Activated T-helper 2 cell treated with anti-CD3 and anti-CD28 coated beads, Interferon-gamma antibody, Interleukin-2, Interleukin-4, amounts not matched to agents 10 μg/mL and 5 μg/mL and 100 μg/mL, durations not matched to agents 14 hours and 24 hours and 36 hours (primary cell): ENCODE measurements at regions of chr19 and their contacts with region 1.

Region 1: GRCh38 chr19:55674841-55675660 is at the start of gene EPN1:
- DNase-seq: peak; percentile 95
- H3K4me3 Mint-ChIP-seq: peak within 1 kb of the TSS; percentile 100
- H3K27ac Mint-ChIP-seq: peak within 1 kb of the TSS; percentile 97
- H3K4me1 Mint-ChIP-seq: peaks cover 37% of the 10 kb centered on the region
- H3K27me3 Mint-ChIP-seq: no peaks in the 10 kb centered on the region
- total RNA-seq, gene EPN1: 40.3 and 41.8 TPM in 2 replicates

Region 2: DNA sequence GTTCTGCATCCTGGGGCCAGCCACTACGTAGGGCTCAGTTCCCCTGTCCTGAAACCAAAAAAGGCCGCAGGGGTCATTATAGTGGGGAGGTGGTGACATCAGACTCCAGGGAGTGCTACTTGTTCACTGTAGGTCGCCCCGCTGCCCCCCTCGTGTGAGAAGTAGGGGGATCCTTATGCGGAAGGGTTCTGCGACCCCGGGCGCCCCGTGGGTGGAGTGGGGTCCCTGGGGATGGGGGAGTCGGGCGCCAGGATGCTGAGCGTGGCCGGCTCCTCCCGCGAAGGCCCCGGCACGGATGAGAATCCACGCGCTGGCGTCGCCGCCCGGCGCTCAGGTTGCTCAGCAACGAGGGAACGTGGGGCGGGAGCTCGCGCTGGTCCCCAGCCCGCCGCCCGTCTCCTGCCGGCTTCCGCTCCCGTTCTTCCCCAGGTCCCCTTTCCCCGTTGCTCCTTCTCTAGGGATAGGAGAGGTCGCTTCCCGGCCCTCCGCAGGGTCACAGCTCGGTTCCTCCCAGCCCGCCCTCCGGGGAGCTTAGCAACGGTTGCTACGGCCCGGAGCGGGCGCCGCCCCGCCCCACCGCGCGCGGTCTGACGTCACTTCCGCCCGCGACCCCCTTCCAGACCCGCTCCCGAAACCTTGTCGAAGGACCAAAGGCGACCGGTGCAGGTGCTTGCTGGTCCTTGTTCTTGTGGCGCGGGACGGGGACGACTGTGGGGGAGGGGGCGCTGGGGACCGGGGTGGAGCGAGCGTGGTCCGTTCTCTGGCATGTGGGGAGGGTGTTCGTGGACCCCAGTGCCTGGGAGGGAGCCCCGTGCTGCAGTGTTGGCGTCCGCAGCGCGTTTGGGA is 190.2 kb before region 1 on chr19 and contains the start of gene NAT14:
- intact Hi-C with region 1: no loop called
- DNase-seq: peak; percentile 62
- H3K4me3 Mint-ChIP-seq: peak within 1 kb of the TSS; percentile 80
- H3K27ac Mint-ChIP-seq: peak within 1 kb of the TSS; percentile 68
- H3K4me1 Mint-ChIP-seq: peaks cover 14% of the 10 kb centered on the region
- H3K27me3 Mint-ChIP-seq: no peaks in the 10 kb centered on the region
- total RNA-seq, gene NAT14: 20.0 and 20.2 TPM in 2 replicates

Region 3: DNA sequence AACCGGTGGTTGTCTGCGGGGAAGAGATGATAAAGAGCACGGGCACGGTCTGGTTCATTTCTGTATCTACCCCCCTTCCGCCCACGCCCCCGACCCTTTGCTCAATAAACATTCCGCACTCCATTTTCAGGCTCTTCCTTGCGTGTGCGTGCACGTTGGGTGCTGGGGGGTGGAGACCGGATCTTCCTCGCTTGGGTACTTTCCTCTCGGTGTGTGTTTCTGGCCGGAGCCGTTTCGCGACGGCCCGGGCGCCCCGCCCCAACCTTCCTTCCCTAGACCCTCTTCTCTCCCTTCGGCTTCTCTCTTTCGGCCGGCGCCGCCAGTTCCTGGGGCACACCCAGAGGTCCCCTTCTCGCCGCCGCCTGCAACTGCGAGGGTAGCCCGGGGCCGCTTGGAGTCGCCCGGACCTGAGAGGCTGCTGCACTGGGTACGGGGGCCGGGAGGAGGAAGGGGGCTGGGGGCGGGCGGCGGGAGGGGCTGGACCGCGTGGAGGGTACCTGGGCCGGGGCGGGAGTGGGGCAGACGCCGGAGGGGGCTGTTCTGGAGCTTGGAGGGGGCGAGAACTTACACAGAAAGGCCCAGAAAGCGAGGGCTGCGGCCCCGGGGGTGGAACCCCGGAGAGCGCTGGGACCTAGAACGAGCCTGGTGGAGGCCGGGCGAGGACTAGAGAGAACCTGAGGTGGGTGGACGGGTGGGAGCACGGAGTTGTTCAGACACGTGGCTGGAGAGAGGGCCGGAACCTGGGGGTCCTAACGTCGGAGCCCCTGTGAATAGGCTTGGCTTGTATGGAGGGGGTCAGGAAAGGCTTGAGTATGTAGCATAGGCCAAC is 31.5 kb before region 1 on chr19 and contains the start of gene ZNF581:
- intact Hi-C with region 1: loop called (anchors 5 kb)
- DNase-seq: peak; percentile 77
- H3K4me3 Mint-ChIP-seq: peak within 1 kb of the TSS; percentile 99
- H3K27ac Mint-ChIP-seq: peak within 1 kb of the TSS; percentile 97
- H3K4me1 Mint-ChIP-seq: peaks cover 36% of the 10 kb centered on the region
- H3K27me3 Mint-ChIP-seq: no peaks in the 10 kb centered on the region
- total RNA-seq, gene ZNF581: 26.6 and 27.0 TPM in 2 replicates

Region 4: GRCh38 chr19:55653758-55654539 is 21.1 kb before region 1 on chr19:
- intact Hi-C with region 1: loop called (anchors 1 kb)
- DNase-seq: peak; percentile 99
- H3K4me3 Mint-ChIP-seq: peak overlapping the region; percentile 91
- H3K27ac Mint-ChIP-seq: peak overlapping the region; percentile 99
- H3K4me1 Mint-ChIP-seq: peaks cover 27% of the 10 kb centered on the region
- H3K27me3 Mint-ChIP-seq: no peaks in the 10 kb centered on the region